ENCODE measurements at regions of chr11 and their contacts with region 1.

Region 1: DNA sequence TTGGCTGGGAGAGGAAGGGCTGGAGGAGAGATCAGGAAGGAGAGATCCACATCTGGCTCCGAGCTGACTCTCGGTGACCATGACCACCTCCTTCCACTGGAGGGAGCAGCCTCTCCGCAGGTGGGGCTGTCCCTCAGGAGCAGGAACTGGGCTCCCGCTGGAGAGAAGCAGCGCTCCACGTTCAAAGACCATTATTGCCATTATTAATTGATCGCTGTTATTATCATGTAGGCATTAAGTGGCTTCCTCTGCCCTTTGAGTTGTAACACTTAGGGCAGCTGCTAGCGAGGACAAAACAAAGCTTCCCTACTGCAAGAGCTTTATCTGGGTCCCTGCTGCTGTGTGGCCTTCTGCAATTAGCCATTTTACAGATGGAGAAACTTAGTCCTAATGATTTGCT is 251.9 kb downstream of the ST3GAL4 start:
- DNase-seq: no peak
- ATAC-seq: peak; percentile 78

Region 2: DNA sequence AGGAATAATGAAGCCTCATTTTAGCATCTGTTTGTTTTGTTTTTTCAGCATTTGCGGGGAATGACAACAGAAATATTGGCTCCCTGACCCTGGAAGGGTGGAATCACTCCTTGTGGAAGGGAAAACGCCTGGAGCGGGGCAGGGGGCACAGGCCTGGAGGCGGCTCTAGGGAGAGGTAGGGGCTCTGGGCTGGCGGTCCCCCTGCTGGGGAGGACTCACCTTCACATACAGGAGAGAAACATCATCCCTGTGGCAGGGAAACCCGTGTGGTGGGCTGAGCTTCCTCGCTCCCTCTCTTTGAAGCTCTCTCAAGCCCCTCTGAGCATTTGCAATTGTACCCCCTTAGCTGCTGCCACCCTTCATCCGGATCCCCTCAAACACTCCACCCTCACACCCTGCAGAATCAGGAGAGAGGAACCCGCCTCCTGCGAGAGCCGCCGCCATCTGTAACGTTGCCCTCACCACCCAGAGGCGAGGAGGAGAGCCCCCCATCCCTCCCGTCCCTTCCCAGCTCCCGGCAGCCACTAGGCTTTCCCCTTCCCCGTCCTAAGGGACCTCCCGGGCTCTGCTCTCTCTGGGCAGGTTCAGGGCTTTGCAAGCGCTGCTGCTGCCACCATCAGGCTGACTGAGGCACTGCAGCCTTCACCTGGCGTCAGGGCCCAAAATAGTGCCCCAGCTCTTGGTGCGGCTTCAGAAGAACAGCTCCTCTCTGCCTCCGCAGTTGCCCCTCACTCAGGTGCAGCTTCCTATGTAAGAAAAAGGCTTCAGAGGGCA is 382.8 kb after region 1 on chr11:
- intact Hi-C with region 1: loop called (anchors 5 kb)
- DNase-seq: peak; percentile 78
- ATAC-seq: peak; percentile 91